ENCODE measurements at regions of chr2 and their contacts with region 1.

Region 1: DNA sequence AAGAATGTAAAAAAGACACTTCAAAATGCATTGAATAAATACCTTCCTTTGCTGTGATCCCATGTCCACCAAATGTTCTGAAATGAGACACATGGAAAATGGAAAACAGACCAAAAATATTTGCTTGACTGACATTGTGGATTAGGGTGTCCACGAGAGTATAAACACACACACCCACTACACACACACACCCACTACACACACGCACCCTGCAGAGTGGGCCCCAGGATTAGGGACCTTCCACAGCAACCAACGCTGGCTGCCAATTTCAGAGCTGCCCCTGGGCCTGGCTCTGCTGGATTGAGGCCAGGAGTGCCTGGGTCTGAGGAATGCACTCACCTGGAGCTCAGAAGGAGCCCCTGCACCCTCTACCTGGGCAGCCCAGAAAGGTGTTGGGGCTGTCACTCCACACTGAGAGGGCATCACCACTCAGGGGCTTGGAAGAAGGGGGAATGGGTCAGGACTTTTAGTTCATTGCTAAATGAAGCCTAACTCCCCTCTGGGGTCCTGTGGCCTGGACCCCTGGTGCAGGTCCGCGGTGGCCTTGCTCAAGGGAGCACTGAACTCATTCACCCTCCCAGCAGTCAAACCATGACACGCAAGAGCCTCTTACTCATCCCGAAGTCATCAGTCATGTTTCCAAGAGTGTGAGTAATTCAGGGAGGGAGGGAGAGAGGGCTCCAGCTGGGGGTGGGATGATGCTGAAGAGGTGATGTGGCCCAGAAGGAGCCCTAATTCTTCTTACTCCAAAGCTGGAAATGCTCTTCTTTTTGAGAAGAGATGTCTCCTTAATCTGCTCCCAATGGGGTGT is 50.2 kb upstream of the PLB1 start:
- DNase-seq: peak; percentile 81
- ATAC-seq: peak; percentile 74
- H3K4me3 Mint-ChIP-seq: no peak overlapping the region
- H3K27ac Mint-ChIP-seq: peak overlapping the region; percentile 59
- H3K4me1 Mint-ChIP-seq: peaks cover 64% of the 10 kb centered on the region
- H3K27me3 Mint-ChIP-seq: no peaks in the 10 kb centered on the region
- CTCF ChIP-seq: no peak

Region 2: GRCh38 chr2:28406276-28407096 is 39.2 kb before region 1 on chr2:
- CTCF ChIA-PET with region 1: interaction called, 6 read pairs
- POLR2A ChIA-PET with region 1: interaction called, 10 read pairs
- intact Hi-C with region 1: loop called (anchors 5 kb)
- DNase-seq: peak; percentile 89
- ATAC-seq: peak; percentile 61
- H3K4me3 Mint-ChIP-seq: no peak overlapping the region
- H3K27ac Mint-ChIP-seq: peak overlapping the region; percentile 97
- H3K4me1 Mint-ChIP-seq: peaks cover 96% of the 10 kb centered on the region
- H3K27me3 Mint-ChIP-seq: no peaks in the 10 kb centered on the region
- CTCF ChIP-seq: no peak

Region 3: DNA sequence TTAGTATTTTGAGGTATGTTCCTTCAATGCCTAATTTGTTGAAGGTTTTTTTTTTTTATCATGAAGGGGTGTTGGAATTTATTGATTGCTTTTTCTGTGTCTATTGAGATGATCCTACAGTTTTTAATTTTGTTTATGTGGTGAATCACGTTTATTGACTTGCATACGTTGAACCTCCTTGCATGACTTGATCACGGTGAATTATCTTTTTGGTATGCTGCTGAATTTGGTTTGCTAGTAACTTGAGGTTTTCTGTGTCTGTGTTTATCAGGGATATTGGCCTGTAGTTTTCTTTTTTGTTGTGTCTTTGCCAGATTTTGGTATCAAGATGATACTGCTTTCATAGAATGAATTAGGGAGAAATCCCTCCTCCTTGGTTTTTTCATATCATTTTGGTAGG is 693.5 kb after region 1 on chr2:
- CTCF ChIA-PET with region 1: no interaction called
- POLR2A ChIA-PET with region 1: no interaction called
- intact Hi-C with region 1: no loop called
- DNase-seq: no peak
- ATAC-seq: no peak
- H3K4me3 Mint-ChIP-seq: no peak overlapping the region
- H3K27ac Mint-ChIP-seq: peak overlapping the region; percentile 33
- H3K4me1 Mint-ChIP-seq: peaks cover 25% of the 10 kb centered on the region
- H3K27me3 Mint-ChIP-seq: no peaks in the 10 kb centered on the region
- CTCF ChIP-seq: no peak

Region 4: DNA sequence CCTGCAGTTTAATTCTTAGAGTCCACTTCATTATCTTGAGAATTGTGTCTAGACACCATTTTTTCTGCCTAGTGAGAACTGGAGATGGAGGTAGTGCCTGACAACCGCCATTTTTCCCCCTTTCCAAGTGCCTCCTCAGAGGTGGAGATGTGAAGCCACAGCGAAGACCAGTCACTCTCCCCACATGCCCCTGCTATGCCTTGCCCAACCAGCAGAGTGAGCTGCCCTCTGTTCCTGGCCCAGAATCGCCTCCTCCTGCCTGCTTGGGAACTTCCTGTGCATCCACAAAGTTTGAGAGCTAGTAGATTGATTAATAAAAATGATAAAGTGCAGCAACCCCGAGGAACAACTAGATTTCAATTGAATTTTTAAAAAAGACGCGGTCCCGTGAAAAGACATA is 792.8 kb after region 1 on chr2:
- CTCF ChIA-PET with region 1: no interaction called
- POLR2A ChIA-PET with region 1: no interaction called
- intact Hi-C with region 1: no loop called
- DNase-seq: peak; percentile 17
- ATAC-seq: peak; percentile 51
- H3K4me3 Mint-ChIP-seq: no peak overlapping the region
- H3K27ac Mint-ChIP-seq: no peak overlapping the region
- H3K4me1 Mint-ChIP-seq: no peaks in the 10 kb centered on the region
- H3K27me3 Mint-ChIP-seq: peaks cover 7% of the 10 kb centered on the region
- CTCF ChIP-seq: peak; percentile 35

Measured in activated CD8-positive, alpha-beta T cell treated with anti-CD3 and anti-CD28 coated beads for 36 hours (primary cell).